Posterior vena cava (tissue), 2 donors: ENCODE measurements at regions of chr14 and their contacts with region 1.

Region 1: GRCh38 chr14:23379366-23380196 is 2.7 kb downstream of the CMTM5 start:
- DNase-seq: no peak

Region 2: DNA sequence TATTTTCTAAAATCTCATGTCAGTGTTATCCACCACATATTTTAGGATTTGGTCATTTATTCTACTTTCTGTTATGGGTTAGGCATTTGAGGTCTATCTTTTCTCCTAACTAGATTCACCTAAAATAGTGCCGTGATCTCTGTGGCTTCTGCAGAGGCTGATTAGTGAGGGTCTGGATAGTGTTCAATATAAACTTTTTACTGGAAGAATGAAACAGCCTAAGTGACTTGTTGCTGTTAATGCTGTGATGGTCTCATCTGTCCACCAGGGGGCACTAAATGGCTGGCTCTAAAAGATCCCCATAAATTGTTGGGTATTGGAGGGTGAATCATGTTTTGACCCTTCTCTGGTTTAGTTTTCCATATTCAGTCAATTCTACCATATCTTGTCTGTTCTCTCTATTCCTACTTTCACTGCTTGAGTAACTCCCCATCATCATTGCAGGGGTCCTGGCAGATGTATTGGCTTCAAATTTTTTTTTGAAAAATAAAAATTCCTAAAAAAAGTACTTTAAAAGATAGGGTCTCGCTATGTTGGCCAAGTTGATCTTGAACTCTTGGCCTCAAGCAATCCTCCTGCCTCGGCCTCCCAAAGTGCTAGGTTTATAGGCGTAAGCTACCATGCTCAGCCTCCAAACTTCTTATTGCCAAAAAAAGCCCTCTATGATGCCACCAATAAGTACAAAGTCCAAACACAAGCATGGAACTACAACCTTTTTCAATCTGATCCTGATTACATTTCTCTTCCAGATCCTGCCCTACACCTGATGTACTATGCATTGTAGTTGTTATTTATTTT is 51.4 kb before region 1 on chr14:
- intact Hi-C with region 1: loop called (anchors 2 to 5 kb)
- DNase-seq: no peak